Heart left ventricle (tissue), 16 donors: ENCODE measurements at regions of chr7 and their contacts with region 1.

Region 1: GRCh38 chr7:107462740-107463444 is 7.0 kb upstream of the GPR22 start:
- DNase-seq: peak in 4 of 5 donors; percentile 49 to 72 (median 59)
- ATAC-seq: peak; percentile 74 to 92 (median 91)
- H3K4me3 ChIP-seq: no peak overlapping the region
- H3K27ac ChIP-seq: peak overlapping the region in 10 of 12 donors; percentile 8 to 52 (median 36)
- H3K4me1 ChIP-seq: peaks cover 0 to 25% (median 1%) of the 10 kb centered on the region in 12 donors
- H3K27me3 ChIP-seq: no peaks in the 10 kb centered on the region
- CTCF ChIP-seq: peak; percentile 53 to 90 (median 78)
- POLR2A ChIP-seq: no peak

Region 2: DNA sequence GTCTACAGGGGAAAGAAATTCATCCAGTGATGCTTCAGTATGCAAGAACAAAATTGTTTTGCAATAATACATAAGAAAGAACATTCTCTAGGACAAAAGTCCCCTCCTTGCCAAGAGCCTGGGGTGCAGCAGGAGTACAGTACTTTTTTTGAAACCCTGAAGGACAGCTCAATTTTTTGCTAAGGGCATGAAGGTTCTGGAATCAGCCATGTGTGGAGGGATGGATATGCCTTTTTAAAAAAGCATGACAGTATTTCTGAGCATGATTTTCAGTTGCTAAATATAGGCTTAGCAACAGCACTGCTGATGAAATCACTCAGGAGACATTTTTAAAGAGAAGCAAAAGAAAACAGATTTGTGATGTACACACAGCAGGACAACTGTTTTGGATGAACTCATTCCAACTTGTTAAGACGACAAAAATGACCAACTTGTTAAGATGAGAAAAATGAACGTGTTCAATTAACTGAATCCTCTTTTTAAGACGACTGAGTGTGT is 254.8 kb before region 1 on chr7:
- intact Hi-C with region 1: loop called in 5 of 10 experiments (anchors 2 to 10 kb)
- DNase-seq: no peak
- ATAC-seq: peak in 3 of 4 donors; percentile 31 to 69 (median 61)
- H3K4me3 ChIP-seq: no peak overlapping the region
- H3K27ac ChIP-seq: peak overlapping the region; percentile 37 to 83 (median 74)
- H3K4me1 ChIP-seq: peaks cover 0 to 34% (median 21%) of the 10 kb centered on the region in 12 donors
- H3K27me3 ChIP-seq: no peaks in the 10 kb centered on the region
- CTCF ChIP-seq: no peak
- POLR2A ChIP-seq: no peak

Region 3: DNA sequence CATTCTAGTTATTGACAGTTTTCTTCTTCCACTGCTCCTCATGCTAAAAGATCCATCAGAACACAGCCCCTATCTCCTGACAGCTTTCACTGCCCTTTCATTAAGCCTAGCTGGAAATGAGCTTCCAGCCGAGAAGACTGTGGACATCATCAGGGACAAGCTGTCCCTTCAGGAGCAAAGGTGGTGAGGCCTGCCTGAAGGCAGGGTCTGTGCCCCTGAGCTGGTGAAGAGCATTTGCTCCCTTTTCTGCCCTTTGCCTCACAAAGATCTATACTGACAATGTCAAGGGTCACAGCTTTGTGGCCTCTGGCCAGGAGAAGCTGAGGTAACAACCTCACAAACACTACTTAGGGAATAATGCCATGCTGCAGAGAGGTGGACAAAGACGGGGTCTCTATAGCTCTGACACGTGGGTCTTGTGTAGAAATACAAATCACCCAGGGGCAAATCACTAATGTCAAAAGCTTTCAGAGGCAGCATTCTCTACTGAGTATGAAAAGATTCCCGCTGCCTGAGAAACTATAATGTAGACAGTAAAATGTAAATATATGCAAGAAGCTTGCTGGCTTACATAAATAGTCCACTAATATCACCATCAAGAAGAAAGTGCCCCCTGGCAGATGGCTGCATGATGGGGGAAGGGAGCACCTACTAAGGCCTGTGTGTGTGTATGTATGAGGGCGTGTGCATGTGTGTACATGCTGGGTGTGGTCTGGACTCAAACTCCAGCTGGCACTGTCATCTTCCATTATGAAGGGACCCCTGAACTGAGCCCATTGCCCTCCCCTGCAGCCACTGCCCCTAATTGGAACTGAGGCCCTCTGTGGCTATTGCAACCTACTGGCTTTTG is 238.3 kb before region 1 on chr7:
- intact Hi-C with region 1: loop called in 1 of 10 experiments (anchors 5 kb)
- DNase-seq: no peak
- ATAC-seq: peak in 2 of 4 donors; percentile 25 to 29
- H3K4me3 ChIP-seq: no peak overlapping the region
- H3K27ac ChIP-seq: peak overlapping the region in 9 of 12 donors; percentile 7 to 93 (median 43)
- H3K4me1 ChIP-seq: peaks cover 0 to 31% (median 2%) of the 10 kb centered on the region in 12 donors
- H3K27me3 ChIP-seq: no peaks in the 10 kb centered on the region
- CTCF ChIP-seq: no peak
- POLR2A ChIP-seq: no peak

Region 4: GRCh38 chr7:107638594-107638993 is 175.7 kb after region 1 on chr7:
- intact Hi-C with region 1: no loop called
- DNase-seq: no peak
- ATAC-seq: no peak
- H3K4me3 ChIP-seq: no peak overlapping the region
- H3K27ac ChIP-seq: no peak overlapping the region
- H3K4me1 ChIP-seq: peaks cover 0 to 3% (median 0%) of the 10 kb centered on the region in 12 donors
- H3K27me3 ChIP-seq: no peaks in the 10 kb centered on the region
- CTCF ChIP-seq: no peak
- POLR2A ChIP-seq: no peak

Region 5: DNA sequence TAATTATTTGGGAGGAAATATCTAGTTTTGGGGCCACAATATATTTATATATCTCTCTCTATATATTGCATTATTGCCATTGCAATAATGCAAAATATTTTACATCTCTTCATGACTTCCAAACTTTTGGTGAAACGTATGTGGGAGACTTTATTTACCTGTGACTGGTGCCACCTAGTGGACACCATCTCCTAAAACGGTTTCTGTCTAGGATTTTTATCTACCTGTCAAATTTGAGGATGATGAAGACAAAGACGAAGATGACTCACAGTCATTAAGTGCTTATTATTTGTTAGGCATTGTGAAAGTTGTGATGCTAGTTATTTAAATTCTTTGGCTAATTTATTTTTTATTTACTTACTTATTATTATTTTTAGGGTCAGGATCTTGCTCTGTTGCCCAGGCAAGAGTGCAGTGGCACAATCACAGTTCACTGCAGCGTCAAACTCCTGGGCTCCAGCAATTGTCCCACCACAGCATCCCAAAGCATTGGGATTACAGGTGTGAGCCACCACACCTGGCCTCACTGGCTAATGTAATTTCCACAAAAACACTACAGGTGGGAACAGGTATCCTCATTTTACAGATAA is 262.4 kb after region 1 on chr7:
- intact Hi-C with region 1: loop called (anchors 1 to 5 kb)
- DNase-seq: peak in 3 of 5 donors; percentile 31 to 45 (median 36)
- ATAC-seq: no peak
- H3K4me3 ChIP-seq: no peak overlapping the region
- H3K27ac ChIP-seq: no peak overlapping the region
- H3K4me1 ChIP-seq: no peaks in the 10 kb centered on the region
- H3K27me3 ChIP-seq: peaks cover 0 to 14% (median 0%) of the 10 kb centered on the region in 9 donors
- CTCF ChIP-seq: peak; percentile 61 to 83 (median 77)
- POLR2A ChIP-seq: no peak

Region 6: DNA sequence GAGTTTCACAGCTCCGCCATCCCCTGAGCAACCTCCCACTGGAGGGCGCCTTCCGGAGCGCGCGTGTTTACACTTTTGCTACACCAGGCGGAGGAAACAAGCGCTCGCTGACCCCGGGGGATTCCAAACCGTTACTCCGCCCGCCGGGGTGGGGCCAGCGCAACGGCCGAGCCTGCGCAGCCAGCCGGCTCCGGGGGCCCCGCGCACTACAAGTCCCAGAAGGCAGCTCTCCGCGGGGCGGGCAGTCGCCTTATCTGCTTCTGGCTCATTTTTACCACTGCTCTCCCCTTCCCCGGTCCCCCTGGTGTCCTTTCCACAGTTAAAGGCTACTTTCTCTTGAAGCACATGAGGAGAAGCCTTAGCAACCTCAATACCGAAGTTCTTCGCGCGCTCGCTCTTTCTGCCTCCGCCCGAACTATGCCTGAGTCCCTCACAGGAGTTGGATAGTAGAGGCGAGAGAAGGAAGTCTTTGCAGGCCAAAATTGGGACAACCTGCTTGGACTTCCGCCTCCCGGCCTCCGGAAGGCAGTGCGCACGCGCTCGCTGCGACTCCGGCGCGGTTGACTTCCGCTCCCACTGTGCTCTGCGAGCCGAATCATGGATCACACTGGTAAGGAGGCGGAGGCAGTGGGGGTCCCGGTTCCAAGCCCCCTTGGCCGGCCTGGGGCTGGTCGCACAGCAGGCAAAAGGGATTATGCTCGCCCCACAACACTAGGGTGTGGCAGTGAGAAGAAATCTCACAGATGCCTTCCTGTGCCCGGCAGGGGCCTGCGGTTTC is 280.9 kb after region 1 on chr7 and contains the start of gene CBLL1:
- intact Hi-C with region 1: loop called in 4 of 10 experiments (anchors 5 kb)
- DNase-seq: peak; percentile 97 to 98 (median 98)
- ATAC-seq: peak; percentile 98 to 99 (median 98)
- H3K4me3 ChIP-seq: peak within 1 kb of the TSS; percentile 67 to 94 (median 82)
- H3K27ac ChIP-seq: peak within 1 kb of the TSS; percentile 92 to 99 (median 97)
- H3K4me1 ChIP-seq: peaks cover 7 to 48% (median 28%) of the 10 kb centered on the region in 12 donors
- H3K27me3 ChIP-seq: no peaks in the 10 kb centered on the region
- CTCF ChIP-seq: peak; percentile 51 to 94 (median 74)
- POLR2A ChIP-seq: peak in 1 of 2 donors; percentile 72
- total RNA-seq, gene CBLL1: 17.1 to 39.8 (median 24.3) TPM